Mucosa of descending colon (tissue), 3 donors: ENCODE measurements at regions of chr15 and their contacts with region 1.

Region 1: DNA sequence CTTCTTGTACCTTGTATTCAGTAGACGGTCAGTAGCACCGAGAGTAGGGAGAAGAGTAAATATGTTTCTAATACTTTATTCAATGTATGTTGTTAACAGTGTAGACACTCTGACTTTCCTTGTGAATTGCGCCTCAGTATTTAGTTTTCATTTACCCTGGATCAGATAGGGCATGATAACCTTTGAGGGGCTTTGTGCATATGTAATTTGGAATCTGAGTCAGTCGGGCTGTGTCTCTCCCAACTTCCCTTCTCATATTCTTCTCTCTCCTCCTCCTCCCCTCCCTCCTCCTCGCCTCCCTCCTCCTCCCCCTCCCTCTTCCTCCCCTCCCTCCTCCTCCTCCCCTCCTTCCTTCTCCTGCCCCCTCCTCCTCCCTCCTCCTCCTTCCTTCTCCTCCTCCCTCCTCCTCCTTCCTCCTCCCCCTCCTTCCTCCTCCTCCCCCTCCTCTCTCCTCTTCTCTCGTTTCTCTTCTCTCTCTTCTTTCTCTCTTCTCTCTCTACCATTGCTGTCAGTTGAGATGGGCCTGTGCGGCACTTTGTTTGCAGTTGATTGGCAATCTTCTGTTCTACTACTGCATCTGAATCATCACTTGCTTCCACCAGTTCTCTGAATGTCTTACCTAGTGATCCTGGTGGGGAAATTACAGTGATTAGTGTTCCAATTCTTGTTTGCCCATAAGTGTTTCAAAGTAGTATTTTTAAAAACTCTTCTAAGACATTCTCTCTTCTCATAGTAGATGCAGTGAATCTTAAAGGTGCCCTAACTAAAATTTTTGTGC is 162.3 kb downstream of the PGPEP1L start:
- DNase-seq: no peak
- ATAC-seq: peak; percentile 14
- H3K4me3 ChIP-seq: no peak overlapping the region
- H3K4me1 ChIP-seq: peaks cover 6% of the 10 kb centered on the region
- CTCF ChIP-seq: no peak

Region 2: DNA sequence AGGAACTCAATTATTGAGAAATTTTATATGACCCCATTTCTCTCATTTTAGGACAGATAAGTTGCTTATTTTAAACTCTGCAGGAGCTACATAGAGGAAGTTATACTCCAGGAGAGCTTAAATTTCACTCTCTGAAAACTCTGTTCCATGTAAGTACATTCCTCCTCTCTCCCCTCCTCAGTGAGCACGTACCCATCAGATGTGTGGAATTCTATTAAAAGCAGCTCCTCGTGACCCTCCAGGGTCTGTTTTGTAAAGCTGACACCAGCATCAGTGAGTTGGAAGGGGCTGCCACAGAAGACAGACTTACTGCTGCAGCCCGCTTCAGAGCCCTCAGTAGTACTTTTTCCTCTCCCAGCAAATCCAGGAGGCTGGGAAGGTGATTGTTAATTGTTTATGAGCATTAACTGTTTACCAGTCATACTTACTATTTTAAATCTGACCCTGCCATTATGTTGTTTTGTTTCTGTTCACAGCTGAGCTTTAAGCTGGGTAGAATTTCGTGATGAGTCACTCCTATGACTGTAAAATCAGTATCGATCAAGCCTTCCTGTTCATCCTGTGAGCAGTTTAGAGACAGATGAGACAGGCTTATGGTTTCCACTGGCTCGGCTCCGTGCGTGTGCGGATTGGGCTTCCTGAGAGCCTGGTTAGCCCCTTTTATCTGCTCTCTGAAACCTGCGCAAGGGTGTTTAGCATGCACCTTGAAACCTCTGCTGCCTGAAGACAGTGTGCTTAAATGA is 176.6 kb before region 1 on chr15:
- intact Hi-C with region 1: no loop called
- DNase-seq: no peak
- ATAC-seq: no peak
- H3K4me3 ChIP-seq: no peak overlapping the region
- H3K4me1 ChIP-seq: no peaks in the 10 kb centered on the region
- CTCF ChIP-seq: no peak

Region 3: DNA sequence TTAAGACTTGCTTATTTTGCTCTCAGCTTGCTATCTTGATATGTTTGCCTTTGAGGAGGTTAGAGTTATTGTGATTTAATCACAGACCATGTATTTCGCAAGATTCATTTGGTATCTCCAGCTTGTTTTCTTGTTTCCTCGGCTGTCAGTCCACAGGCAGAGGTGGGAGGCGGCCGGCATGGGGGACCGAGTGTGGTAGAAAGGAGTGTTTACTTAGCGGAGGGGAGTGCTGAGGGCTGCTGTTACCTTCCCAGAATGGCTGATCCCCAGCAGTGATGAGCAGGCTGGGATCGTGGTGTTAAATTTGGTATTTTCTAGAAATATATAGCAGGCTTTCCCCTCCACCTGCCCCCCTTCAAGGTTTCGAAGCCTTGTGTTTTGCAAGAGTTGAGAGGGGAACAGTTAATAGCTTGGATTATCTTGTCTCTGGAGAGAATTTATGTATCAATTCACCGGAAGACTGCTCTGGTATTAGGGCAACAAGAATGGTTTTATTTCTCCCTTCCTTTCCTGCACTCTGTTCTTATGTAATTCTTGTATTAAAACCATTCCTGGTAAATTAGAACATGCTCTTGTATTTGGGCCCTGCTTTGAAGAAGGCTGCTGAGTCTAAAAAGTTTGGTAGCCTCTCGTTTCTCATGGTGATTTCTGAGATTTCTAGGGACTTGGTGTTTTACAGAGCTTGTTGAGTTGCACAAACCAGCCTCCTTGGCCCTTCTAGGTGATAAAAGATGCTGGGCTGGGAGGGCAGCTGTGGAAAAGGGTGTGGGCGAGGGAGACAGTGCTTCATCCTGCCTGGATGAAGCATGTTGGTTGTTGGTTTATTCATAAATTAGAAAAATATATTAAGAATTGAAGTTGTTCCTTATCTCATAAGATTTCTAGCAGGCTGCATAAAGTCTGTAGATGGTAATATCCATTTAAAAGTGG is 45.6 kb before region 1 on chr15:
- intact Hi-C with region 1: loop called in 1 of 2 experiments (anchors 10 kb)
- DNase-seq: no peak
- ATAC-seq: no peak
- H3K4me3 ChIP-seq: no peak overlapping the region
- H3K4me1 ChIP-seq: peaks cover 24% of the 10 kb centered on the region
- CTCF ChIP-seq: no peak